ENCODE measurements at regions of chr20 and their contacts with region 1.

Region 1: GRCh38 chr20:49699200-49699992 is 14.3 kb downstream of the B4GALT5 start:
- DNase-seq: no peak
- ATAC-seq: peak; percentile 96
- H3K4me3 Mint-ChIP-seq: peak overlapping the region; percentile 66
- H3K27ac Mint-ChIP-seq: peak overlapping the region; percentile 79
- H3K4me1 Mint-ChIP-seq: peaks cover 76% of the 10 kb centered on the region
- H3K27me3 Mint-ChIP-seq: no peaks in the 10 kb centered on the region
- CTCF ChIP-seq: no peak

Region 2: GRCh38 chr20:49668181-49668877 is 31.1 kb before region 1 on chr20:
- CTCF ChIA-PET with region 1: no interaction called
- POLR2A ChIA-PET with region 1: interaction called, 4 read pairs
- intact Hi-C with region 1: loop called (anchors 2 kb)
- DNase-seq: peak; percentile 43
- ATAC-seq: peak; percentile 84
- H3K4me3 Mint-ChIP-seq: peak overlapping the region; percentile 68
- H3K27ac Mint-ChIP-seq: peak overlapping the region; percentile 66
- H3K4me1 Mint-ChIP-seq: peaks cover 65% of the 10 kb centered on the region
- H3K27me3 Mint-ChIP-seq: no peaks in the 10 kb centered on the region
- CTCF ChIP-seq: no peak

Region 3: GRCh38 chr20:49676581-49677291 is 22.7 kb before region 1 on chr20:
- CTCF ChIA-PET with region 1: no interaction called
- POLR2A ChIA-PET with region 1: interaction called, 4 read pairs
- intact Hi-C with region 1: loop called (anchors 2 kb)
- DNase-seq: no peak
- ATAC-seq: peak; percentile 78
- H3K4me3 Mint-ChIP-seq: peak overlapping the region; percentile 47
- H3K27ac Mint-ChIP-seq: peak overlapping the region; percentile 87
- H3K4me1 Mint-ChIP-seq: peaks cover 72% of the 10 kb centered on the region
- H3K27me3 Mint-ChIP-seq: no peaks in the 10 kb centered on the region
- CTCF ChIP-seq: no peak